Uterus (tissue), 4 donors: ENCODE measurements at regions of chr15 and their contacts with region 1.

Region 1: DNA sequence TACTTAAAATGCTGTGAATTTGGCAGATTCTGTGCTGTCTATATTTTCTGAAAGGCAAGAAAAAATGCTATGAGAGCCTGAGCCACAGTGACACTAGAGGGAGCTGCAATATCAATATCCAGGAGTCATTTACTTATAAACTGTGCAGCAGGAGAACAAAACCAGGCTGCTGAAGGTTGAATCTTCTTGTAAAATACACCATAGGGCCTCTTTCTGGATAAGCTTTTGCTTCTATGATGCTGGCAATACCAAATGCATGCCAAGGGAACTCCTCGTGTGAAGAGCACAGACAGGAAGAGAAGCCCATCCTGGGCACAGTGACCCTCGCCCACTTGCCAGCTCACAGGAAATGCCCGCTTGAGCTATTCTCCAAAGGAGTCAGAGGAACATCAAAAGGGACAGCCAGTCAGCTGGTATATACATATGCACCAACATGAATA is 48.0 kb upstream of the TSPAN3 start:
- DNase-seq: peak in 1 of 2 donors; percentile 46
- H3K4me3 ChIP-seq: no peak overlapping the region
- H3K27ac ChIP-seq: peak overlapping the region in 1 of 2 donors; percentile 45
- H3K4me1 ChIP-seq: peaks cover 3 to 8% of the 10 kb centered on the region in 2 donors
- H3K27me3 ChIP-seq: no peaks in the 10 kb centered on the region
- CTCF ChIP-seq: peak; percentile 60 to 78 (median 70)
- POLR2A ChIP-seq: no peak

Region 2: GRCh38 chr15:76916369-76916768 is 202.5 kb before region 1 on chr15:
- intact Hi-C with region 1: no loop called
- DNase-seq: no peak
- H3K4me3 ChIP-seq: no peak overlapping the region
- H3K27ac ChIP-seq: no peak overlapping the region
- H3K4me1 ChIP-seq: no peaks in the 10 kb centered on the region
- H3K27me3 ChIP-seq: no peaks in the 10 kb centered on the region
- CTCF ChIP-seq: no peak
- POLR2A ChIP-seq: no peak

Region 3: GRCh38 chr15:77496710-77497103 is 377.8 kb after region 1 on chr15:
- intact Hi-C with region 1: loop called (anchors 10 kb)
- DNase-seq: peak; percentile 89
- H3K4me3 ChIP-seq: no peak overlapping the region
- H3K27ac ChIP-seq: peak overlapping the region; percentile 78 to 84
- H3K4me1 ChIP-seq: peaks cover 5 to 13% of the 10 kb centered on the region in 2 donors
- H3K27me3 ChIP-seq: no peaks in the 10 kb centered on the region
- CTCF ChIP-seq: peak; percentile 76 to 91 (median 88)
- POLR2A ChIP-seq: no peak

Region 4: DNA sequence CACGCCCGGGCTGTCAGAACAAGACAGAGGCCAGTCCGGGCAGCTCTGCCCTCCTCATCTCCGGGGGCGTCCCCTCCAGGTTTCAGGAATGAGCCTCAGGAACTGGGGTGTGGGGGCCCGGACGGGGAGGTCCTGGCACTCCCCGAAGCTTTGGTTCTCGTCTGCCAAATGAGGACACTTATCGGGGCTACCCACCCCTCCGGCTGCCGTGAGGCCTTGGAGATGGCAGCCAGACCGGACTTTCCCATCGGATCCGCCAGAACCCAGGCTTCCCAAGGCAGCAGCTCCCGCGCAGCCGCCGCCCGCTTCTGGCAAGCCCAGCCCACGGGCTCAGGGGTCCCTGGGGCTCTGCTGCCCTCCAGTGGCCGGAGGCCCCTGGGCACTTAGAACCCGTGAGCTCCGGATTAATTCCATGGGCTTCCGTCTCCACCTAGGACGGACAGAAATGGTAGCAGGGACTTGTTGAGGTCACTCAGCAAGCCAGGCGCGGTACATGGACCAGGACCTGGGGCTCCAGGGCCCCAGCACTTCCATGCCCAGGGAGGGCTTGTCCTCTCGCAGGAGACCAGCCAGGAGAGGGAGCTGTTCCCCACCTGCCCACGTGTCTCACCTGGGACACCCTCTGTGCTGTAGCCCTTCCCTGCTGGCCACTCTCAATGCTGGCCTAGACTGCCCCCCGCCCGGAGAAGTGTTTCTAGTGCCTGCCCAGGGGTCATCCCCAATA is 424.4 kb after region 1 on chr15:
- intact Hi-C with region 1: loop called (anchors 10 kb)
- DNase-seq: peak; percentile 82 to 89
- H3K4me3 ChIP-seq: peak overlapping the region in 1 of 2 donors; percentile 26
- H3K27ac ChIP-seq: peak overlapping the region; percentile 60 to 68
- H3K4me1 ChIP-seq: no peaks in the 10 kb centered on the region
- H3K27me3 ChIP-seq: no peaks in the 10 kb centered on the region
- CTCF ChIP-seq: peak; percentile 96 to 99 (median 98)
- POLR2A ChIP-seq: peak in 1 of 2 donors; percentile 38